Left colon (tissue), 2 donors: ENCODE measurements at regions of chr2 and their contacts with region 1.

Region 1: DNA sequence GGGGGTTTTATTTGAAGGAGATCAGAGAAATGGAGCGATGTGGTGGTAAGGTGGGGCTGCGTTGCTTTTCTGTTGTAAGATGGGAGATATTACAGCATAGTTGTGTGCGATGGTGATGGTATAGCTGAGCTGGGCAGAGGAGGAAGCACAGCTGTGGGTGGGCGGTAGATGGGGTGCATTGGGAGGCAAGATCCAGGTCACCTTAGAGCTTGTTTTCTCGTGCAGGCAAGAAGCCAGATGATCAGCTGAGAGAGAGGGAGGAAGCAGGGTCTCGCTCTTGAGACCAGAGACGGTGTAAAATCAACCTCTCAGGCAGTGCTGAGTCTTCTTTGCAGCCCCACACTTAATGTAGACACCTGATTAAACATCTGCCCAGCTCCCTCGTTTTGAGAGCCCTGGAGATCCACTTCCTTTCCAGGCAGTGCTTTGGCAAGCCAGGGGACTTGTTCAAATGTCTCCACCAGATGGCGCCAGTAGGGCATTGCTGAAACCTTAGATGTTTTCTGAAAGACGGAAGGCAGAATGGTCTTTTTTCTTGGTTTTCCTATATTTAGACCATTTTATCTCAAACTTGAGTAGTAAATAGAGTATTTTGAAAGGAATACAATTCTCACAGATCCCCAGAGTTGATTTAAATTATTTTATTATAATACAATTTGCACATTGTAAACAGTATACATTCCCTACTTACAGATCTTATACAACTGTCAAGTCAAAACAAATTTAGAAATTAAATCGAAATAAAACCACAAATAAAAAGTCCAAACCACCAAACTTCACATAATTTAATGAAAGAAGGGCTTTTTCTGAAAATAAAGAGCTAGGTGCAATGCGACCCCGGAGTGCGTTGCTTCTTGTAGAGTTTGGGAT is 21.1 kb upstream of the LYPD6B start:
- DNase-seq: peak; percentile 61 to 87
- ATAC-seq: peak; percentile 67

Region 2: DNA sequence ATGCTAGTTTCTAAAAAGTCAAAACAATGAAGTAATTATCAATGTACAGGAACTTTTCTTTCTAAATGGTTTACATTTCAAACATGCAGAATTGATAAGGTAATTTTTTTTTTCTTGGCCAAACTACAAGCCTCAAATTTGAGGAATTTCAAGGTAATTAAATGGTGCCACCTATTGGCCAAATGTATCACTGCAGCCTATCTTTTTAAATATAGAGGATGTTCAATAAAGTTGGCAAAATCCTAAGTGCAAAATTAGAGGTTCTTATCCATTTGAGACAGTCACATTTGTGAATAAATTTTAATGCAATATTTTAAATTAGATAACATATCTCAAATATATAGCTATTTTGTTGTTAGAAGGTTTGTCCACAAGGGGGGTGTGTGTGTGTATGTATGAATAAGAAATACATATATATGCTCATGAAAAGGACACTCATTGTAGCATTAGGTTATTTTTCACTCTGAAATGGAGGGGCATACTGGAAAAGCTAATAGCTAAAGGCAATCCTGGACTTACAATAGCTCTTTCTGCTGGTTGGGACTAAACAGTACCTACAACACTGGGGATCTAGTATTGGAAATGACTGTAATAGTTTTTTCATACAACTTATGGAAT is 544.1 kb after region 1 on chr2:
- intact Hi-C with region 1: loop called (anchors 5 kb)
- DNase-seq: no peak
- ATAC-seq: peak; percentile 39